B cell (primary cell): ENCODE measurements at regions of chr16 and their contacts with region 1.

Region 1: GRCh38 chr16:30183233-30184095 is at the start of gene CORO1A:
- DNase-seq: peak; percentile 91
- ATAC-seq: peak; percentile 62
- H3K4me3 ChIP-seq: peak within 1 kb of the TSS; percentile 54 to 99 (median 97)
- H3K4me3 Mint-ChIP-seq: peak within 1 kb of the TSS; percentile 90
- H3K27ac ChIP-seq: peak within 1 kb of the TSS; percentile 78 to 87
- H3K27ac Mint-ChIP-seq: peak within 1 kb of the TSS; percentile 99
- H3K4me1 ChIP-seq: peaks cover 40 to 48% of the 10 kb centered on the region in 2 donors
- H3K4me1 Mint-ChIP-seq: peaks cover 46% of the 10 kb centered on the region
- H3K27me3 ChIP-seq: no peaks in the 10 kb centered on the region
- H3K27me3 Mint-ChIP-seq: no peaks in the 10 kb centered on the region
- CTCF ChIP-seq: no peak
- total RNA-seq, gene CORO1A: 653 and 662 TPM in 2 replicates

Region 2: GRCh38 chr16:30122604-30123160 is 60.8 kb before region 1 on chr16:
- CTCF ChIA-PET with region 1: interaction called, 5 read pairs
- POLR2A ChIA-PET with region 1: interaction called, 10 read pairs
- intact Hi-C with region 1: no loop called
- DNase-seq: peak; percentile 50
- ATAC-seq: peak; percentile 9
- H3K4me3 ChIP-seq: peak overlapping the region; percentile 38 to 79 (median 75)
- H3K4me3 Mint-ChIP-seq: peak overlapping the region; percentile 86
- H3K27ac ChIP-seq: peak overlapping the region; percentile 38 to 74
- H3K27ac Mint-ChIP-seq: peak overlapping the region; percentile 81
- H3K4me1 ChIP-seq: peaks cover 18 to 24% of the 10 kb centered on the region in 2 donors
- H3K4me1 Mint-ChIP-seq: peaks cover 24% of the 10 kb centered on the region
- H3K27me3 ChIP-seq: no peaks in the 10 kb centered on the region
- H3K27me3 Mint-ChIP-seq: no peaks in the 10 kb centered on the region
- CTCF ChIP-seq: no peak

Region 3: DNA sequence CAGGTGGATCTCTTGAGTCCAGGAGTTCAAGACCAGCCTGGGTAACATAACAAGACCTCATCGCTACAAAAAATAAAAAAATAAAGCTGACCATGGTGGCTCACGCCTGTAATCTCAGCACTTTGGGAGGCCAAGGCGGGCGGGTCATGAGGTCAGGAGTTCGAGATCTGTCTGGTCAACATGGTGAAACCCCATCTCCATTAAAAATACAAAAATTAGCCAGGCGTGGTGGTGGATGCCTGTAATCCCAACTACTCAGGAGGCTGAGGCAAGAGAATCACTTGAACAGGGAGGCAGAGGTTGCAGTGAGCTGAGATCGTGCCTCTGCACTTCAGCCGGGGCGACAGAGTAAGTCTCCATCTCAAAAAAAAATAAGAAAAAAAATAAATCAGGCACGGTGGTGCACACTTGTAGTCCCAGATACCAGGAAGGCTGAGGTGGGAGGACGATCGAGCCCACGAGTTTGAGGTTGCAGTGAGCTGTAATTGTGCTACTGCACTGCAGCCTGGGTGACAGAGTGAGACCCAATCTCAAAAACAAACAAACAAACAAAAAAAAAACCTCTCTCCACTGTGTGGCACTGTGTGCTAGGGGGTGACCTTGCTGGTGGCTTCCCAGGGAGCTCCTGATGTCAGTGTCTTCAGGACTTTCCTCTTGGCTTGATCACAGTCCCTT is 40.7 kb before region 1 on chr16:
- CTCF ChIA-PET with region 1: interaction called, 11 read pairs
- POLR2A ChIA-PET with region 1: interaction called, 8 read pairs
- intact Hi-C with region 1: loop called (anchors 1 kb)
- DNase-seq: peak; percentile 57
- ATAC-seq: peak; percentile 60
- H3K4me3 ChIP-seq: no peak overlapping the region
- H3K4me3 Mint-ChIP-seq: no peak overlapping the region
- H3K27ac ChIP-seq: no peak overlapping the region
- H3K27ac Mint-ChIP-seq: no peak overlapping the region
- H3K4me1 ChIP-seq: peaks cover 6 to 13% of the 10 kb centered on the region in 2 donors
- H3K4me1 Mint-ChIP-seq: peaks cover 9% of the 10 kb centered on the region
- H3K27me3 ChIP-seq: no peaks in the 10 kb centered on the region
- H3K27me3 Mint-ChIP-seq: no peaks in the 10 kb centered on the region
- CTCF ChIP-seq: peak; percentile 40

Region 4: DNA sequence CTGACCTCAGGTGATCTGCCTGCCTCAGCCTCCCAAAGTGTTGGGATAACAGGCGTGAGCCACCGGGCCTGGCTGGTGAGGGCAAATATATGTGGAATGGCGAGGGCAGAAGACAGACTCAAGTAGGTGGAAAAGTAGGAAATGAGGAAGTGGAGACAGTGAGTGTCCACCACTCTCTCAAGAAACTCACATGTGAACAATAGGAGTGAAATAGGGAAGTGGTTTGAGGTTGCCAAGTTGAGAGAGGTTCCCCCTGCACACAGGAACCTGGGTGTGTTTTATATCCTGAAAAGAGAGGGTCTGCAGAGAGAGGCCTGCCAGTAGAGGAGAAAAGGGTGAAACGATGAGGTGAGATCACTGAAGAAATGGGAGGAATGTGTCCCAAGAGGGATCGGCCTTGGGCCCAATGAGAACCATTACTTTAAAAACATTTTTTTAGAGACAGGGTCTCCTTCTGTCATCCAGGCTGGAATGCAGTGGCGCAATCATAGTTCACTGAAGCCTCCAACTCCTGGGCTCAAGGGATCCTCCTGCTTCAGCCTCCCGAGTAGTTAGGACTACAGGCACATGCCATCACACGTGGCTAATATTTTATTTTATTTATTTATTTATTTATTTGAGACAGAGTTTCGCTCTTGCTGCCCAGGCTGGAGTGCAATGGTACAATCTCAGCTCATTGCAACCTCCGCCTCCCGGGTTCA is 17.1 kb before region 1 on chr16:
- CTCF ChIA-PET with region 1: no interaction called
- POLR2A ChIA-PET with region 1: interaction called, 7 read pairs
- intact Hi-C with region 1: loop called (anchors 1 kb)
- DNase-seq: peak; percentile 80
- ATAC-seq: peak; percentile 93
- H3K4me3 ChIP-seq: peak overlapping the region in 4 of 5 experiments; percentile 0 to 47 (median 31)
- H3K4me3 Mint-ChIP-seq: peak overlapping the region; percentile 70
- H3K27ac ChIP-seq: peak overlapping the region; percentile 18 to 41
- H3K27ac Mint-ChIP-seq: peak overlapping the region; percentile 94
- H3K4me1 ChIP-seq: peaks cover 21 to 28% of the 10 kb centered on the region in 2 donors
- H3K4me1 Mint-ChIP-seq: peaks cover 25% of the 10 kb centered on the region
- H3K27me3 ChIP-seq: no peaks in the 10 kb centered on the region
- H3K27me3 Mint-ChIP-seq: no peaks in the 10 kb centered on the region
- CTCF ChIP-seq: no peak